MCF 10A (cell line): ENCODE measurements at regions of chr15 and their contacts with region 1.

Region 1: DNA sequence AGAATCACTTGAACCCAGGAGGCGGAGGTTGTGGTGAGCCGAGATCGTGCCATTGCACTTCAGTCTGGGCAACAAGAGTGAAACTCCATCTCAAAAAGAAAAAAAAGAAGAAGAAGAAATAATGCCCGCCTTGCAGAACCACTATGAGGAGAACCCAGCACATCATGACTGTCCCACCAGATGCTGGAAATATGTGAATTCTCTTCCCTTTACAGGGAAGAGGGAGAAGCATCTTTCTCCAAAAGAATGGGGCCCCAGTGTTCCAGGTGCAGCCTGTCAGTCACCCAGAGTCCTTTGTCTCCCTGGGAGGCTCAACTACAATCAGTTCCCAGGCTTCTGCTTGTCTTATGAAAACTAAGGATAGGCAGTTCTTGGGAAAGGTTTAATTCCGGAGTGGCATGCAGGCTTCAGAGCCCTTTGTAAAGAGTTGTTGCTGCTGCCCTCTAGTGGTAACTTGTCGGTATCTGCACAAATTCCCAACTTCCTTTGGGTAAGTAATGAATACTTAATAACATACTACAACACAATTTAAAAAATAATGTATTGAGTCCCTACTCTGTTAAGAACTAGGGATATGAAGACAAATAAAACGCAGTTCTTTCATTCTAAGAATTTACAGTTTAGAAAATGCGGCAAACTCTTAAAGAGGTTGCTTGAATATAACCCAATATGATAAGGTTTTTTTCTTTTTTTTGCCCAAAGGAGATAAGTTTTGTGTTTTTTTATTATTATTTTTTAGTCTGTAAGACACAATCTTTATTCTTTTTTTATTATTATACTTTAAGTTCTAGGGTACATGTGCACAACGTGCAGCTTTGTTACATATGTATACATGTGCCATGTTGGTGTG is 18.6 kb upstream of the TICRR start:
- DNase-seq: peak; percentile 85
- H3K4me3 Mint-ChIP-seq: no peak overlapping the region
- H3K27ac Mint-ChIP-seq: no peak overlapping the region
- H3K4me1 Mint-ChIP-seq: no peaks in the 10 kb centered on the region
- H3K27me3 Mint-ChIP-seq: no peaks in the 10 kb centered on the region
- CTCF ChIP-seq: peak; percentile 77

Region 2: GRCh38 chr15:89442671-89443307 is 113.8 kb before region 1 on chr15:
- CTCF ChIA-PET with region 1: interaction called, 35 read pairs
- POLR2A ChIA-PET with region 1: interaction called, 3 read pairs
- intact Hi-C with region 1: loop called (anchors 1 kb)
- DNase-seq: peak; percentile 70
- H3K4me3 Mint-ChIP-seq: no peak overlapping the region
- H3K27ac Mint-ChIP-seq: no peak overlapping the region
- H3K4me1 Mint-ChIP-seq: no peaks in the 10 kb centered on the region
- H3K27me3 Mint-ChIP-seq: peaks cover 25% of the 10 kb centered on the region
- CTCF ChIP-seq: peak; percentile 75

Region 3: DNA sequence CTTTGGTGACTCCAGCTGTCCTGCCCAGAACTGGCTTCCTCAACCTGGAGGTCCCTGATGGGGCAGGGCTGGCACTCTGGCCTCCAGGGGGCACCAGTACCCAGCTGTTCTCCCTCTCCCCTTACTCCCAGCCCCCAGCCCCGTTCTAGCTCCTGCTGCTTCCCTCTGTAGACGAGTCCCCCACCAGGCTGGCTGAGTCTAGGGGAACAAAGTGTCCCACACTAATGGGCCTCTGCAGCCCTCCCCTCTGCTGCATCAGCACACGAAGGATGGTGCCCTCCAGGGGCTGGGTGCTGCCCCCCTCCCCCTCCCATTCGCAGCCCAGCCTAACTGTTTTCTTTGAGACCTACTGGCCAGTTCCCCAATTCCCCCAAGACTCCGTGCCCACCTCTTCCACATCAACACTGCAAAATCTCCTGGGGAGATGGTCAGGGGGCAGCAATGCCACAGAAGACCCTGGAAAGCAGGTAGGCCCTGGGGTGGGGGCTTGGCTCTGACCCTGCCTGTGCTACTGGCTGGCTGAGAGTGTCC is 64.5 kb before region 1 on chr15:
- CTCF ChIA-PET with region 1: interaction called, 10 read pairs
- POLR2A ChIA-PET with region 1: no interaction called
- intact Hi-C with region 1: loop called (anchors 1 kb)
- DNase-seq: peak; percentile 35
- H3K4me3 Mint-ChIP-seq: no peak overlapping the region
- H3K27ac Mint-ChIP-seq: no peak overlapping the region
- H3K4me1 Mint-ChIP-seq: peaks cover 8% of the 10 kb centered on the region
- H3K27me3 Mint-ChIP-seq: no peaks in the 10 kb centered on the region
- CTCF ChIP-seq: peak; percentile 29

Region 4: DNA sequence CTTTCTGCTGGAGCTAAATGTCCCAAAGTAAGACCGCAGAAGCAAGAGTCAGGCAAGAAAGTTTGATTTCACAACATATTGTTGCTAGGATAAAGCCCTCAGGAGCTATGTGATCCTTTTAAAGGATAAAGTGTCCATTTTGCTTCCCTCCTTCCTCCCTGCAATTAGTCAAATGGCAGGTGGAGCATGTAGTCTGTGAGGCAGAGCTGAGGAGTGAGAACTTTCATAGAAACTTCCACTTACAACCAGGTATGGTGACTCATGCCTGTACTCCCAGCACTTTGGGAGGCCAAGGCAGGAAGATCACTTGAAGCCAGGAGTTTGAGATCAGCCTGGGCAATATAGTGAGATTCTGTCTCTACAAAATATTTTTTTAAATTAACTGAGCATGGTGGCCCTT is 35.0 kb before region 1 on chr15:
- CTCF ChIA-PET with region 1: interaction called, 4 read pairs
- POLR2A ChIA-PET with region 1: no interaction called
- intact Hi-C with region 1: loop called (anchors 1 kb)
- DNase-seq: peak; percentile 35
- H3K4me3 Mint-ChIP-seq: no peak overlapping the region
- H3K27ac Mint-ChIP-seq: no peak overlapping the region
- H3K4me1 Mint-ChIP-seq: no peaks in the 10 kb centered on the region
- H3K27me3 Mint-ChIP-seq: no peaks in the 10 kb centered on the region
- CTCF ChIP-seq: no peak